Activated CD4-positive, alpha-beta memory T cell treated with anti-CD3 and anti-CD28 coated beads, Interleukin-2, amount 10 ng/mL, durations not matched to agents 7 days and 5 days (primary cell): ENCODE measurements at regions of chr1 and their contacts with region 1.

Region 1: GRCh38 chr1:20172033-20172590 is 13.8 kb upstream of the UBXN10 start:
- DNase-seq: no peak
- H3K4me3 Mint-ChIP-seq: no peak overlapping the region
- H3K27ac Mint-ChIP-seq: no peak overlapping the region
- H3K4me1 Mint-ChIP-seq: peaks cover 12% of the 10 kb centered on the region
- H3K27me3 Mint-ChIP-seq: peaks cover 2% of the 10 kb centered on the region

Region 2: GRCh38 chr1:19715334-19716203 is 456.5 kb before region 1 on chr1:
- CTCF ChIA-PET with region 1: no interaction called
- POLR2A ChIA-PET with region 1: no interaction called
- DNase-seq: peak; percentile 87
- H3K4me3 Mint-ChIP-seq: no peak overlapping the region
- H3K27ac Mint-ChIP-seq: no peak overlapping the region
- H3K4me1 Mint-ChIP-seq: peaks cover 18% of the 10 kb centered on the region
- H3K27me3 Mint-ChIP-seq: no peaks in the 10 kb centered on the region

Region 3: GRCh38 chr1:20143734-20144565 is 28.2 kb before region 1 on chr1:
- CTCF ChIA-PET with region 1: no interaction called
- POLR2A ChIA-PET with region 1: no interaction called
- DNase-seq: no peak
- H3K4me3 Mint-ChIP-seq: no peak overlapping the region
- H3K27ac Mint-ChIP-seq: no peak overlapping the region
- H3K4me1 Mint-ChIP-seq: no peaks in the 10 kb centered on the region
- H3K27me3 Mint-ChIP-seq: no peaks in the 10 kb centered on the region

Region 4: GRCh38 chr1:20160034-20160433 is 12.1 kb before region 1 on chr1:
- CTCF ChIA-PET with region 1: no interaction called
- POLR2A ChIA-PET with region 1: no interaction called
- DNase-seq: no peak
- H3K4me3 Mint-ChIP-seq: no peak overlapping the region
- H3K27ac Mint-ChIP-seq: no peak overlapping the region
- H3K4me1 Mint-ChIP-seq: no peaks in the 10 kb centered on the region
- H3K27me3 Mint-ChIP-seq: no peaks in the 10 kb centered on the region

Region 5: GRCh38 chr1:20187103-20187812 is 15.1 kb after region 1 on chr1:
- CTCF ChIA-PET with region 1: interaction called, 4 read pairs
- POLR2A ChIA-PET with region 1: interaction called, 13 read pairs
- DNase-seq: peak; percentile 55
- H3K4me3 Mint-ChIP-seq: peak overlapping the region; percentile 61
- H3K27ac Mint-ChIP-seq: peak overlapping the region; percentile 70
- H3K4me1 Mint-ChIP-seq: peaks cover 52% of the 10 kb centered on the region
- H3K27me3 Mint-ChIP-seq: peaks cover 19% of the 10 kb centered on the region